ENCODE measurements at regions of chr6 and their contacts with region 1.

Region 1: DNA sequence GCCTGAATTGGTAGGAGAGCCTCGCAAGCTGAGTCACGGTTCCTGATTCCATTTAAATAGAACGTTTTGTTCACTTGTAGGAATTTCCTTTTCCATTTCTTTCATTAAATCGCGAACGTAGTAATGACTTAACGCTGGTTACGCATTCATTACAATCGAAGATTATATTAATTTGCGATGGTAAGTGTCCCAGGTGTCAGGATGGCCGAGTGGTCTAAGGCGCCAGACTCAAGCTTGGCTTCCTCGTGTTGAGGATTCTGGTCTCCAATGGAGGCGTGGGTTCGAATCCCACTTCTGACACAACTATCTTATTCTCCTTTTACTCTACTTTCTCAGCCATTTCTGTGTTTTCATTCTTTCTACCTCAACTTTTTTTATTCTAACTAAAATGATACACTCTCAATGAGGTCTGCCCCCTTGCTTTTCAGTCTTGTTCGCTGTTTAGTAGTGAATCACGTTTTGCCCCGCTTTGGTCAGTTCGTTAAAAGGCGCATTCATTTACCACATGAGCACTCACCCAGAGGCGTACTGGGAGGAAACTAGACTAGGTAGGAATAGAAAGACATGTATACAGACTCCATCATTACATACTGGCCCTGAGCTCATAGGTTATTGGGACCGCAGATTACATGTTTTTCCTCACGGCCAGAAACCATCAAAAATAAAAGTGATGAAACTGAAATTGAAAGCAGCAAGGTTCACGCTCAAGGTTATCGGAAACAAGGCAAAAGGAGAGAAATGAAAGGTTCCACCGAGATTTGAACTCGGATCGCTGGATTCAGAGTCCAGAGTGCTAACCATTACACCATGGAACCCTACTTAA is 17.3 kb upstream of the TRIM27 start:
- DNase-seq: peak; percentile 48 to 82 (median 81)
- H3K4me3 ChIP-seq: peak overlapping the region; percentile 84
- H3K4me3 Mint-ChIP-seq: peak overlapping the region; percentile 89 to 98 (median 93)
- H3K27ac ChIP-seq: peak overlapping the region; percentile 86
- H3K27ac Mint-ChIP-seq: peak overlapping the region; percentile 91 to 97 (median 94)
- H3K4me1 ChIP-seq: peaks cover 35% of the 10 kb centered on the region
- H3K4me1 Mint-ChIP-seq: peaks cover 42 to 58% (median 52%) of the 10 kb centered on the region in 3 donors
- H3K27me3 ChIP-seq: no peaks in the 10 kb centered on the region
- H3K27me3 Mint-ChIP-seq: peaks cover 0 to 20% of the 10 kb centered on the region in 2 donors

Region 2: GRCh38 chr6:28923318-28924102 is 17.6 kb before region 1 on chr6 and contains the start of gene TRIM27:
- CTCF ChIA-PET with region 1: interaction called, 7 read pairs
- POLR2A ChIA-PET with region 1: interaction called, 10 read pairs
- DNase-seq: peak; percentile 73 to 85 (median 75)
- H3K4me3 ChIP-seq: peak within 1 kb of the TSS; percentile 59
- H3K4me3 Mint-ChIP-seq: peak within 1 kb of the TSS; percentile 90 to 98 (median 95)
- H3K27ac ChIP-seq: peak within 1 kb of the TSS; percentile 72
- H3K27ac Mint-ChIP-seq: peak within 1 kb of the TSS; percentile 87 to 97 (median 94)
- H3K4me1 ChIP-seq: peaks cover 42% of the 10 kb centered on the region
- H3K4me1 Mint-ChIP-seq: peaks cover 31 to 48% (median 44%) of the 10 kb centered on the region in 3 donors
- H3K27me3 ChIP-seq: no peaks in the 10 kb centered on the region
- H3K27me3 Mint-ChIP-seq: peaks cover 0 to 4% of the 10 kb centered on the region in 2 donors
- total RNA-seq, gene TRIM27: 67.7 to 69.2 TPM

Region 3: GRCh38 chr6:29028821-29029220 is 87.8 kb after region 1 on chr6:
- CTCF ChIA-PET with region 1: no interaction called
- POLR2A ChIA-PET with region 1: no interaction called
- DNase-seq: no peak
- H3K4me3 ChIP-seq: no peak overlapping the region
- H3K4me3 Mint-ChIP-seq: no peak overlapping the region
- H3K27ac ChIP-seq: no peak overlapping the region
- H3K27ac Mint-ChIP-seq: no peak overlapping the region
- H3K4me1 ChIP-seq: no peaks in the 10 kb centered on the region
- H3K4me1 Mint-ChIP-seq: no peaks in the 10 kb centered on the region
- H3K27me3 ChIP-seq: peaks cover 13% of the 10 kb centered on the region
- H3K27me3 Mint-ChIP-seq: peaks cover 30 to 73% of the 10 kb centered on the region in 2 donors

Measured in CD8-positive, alpha-beta memory T cell (primary cell).